ENCODE measurements at regions of chr1 and their contacts with region 1.

Region 1: GRCh38 chr1:32321712-32322291 is 14.2 kb downstream of the MARCKSL1 start:
- H3K4me3 ChIP-seq: no peak overlapping the region
- H3K27ac ChIP-seq: no peak overlapping the region
- H3K4me1 ChIP-seq: no peaks in the 10 kb centered on the region
- CTCF ChIP-seq: no peak

Region 2: DNA sequence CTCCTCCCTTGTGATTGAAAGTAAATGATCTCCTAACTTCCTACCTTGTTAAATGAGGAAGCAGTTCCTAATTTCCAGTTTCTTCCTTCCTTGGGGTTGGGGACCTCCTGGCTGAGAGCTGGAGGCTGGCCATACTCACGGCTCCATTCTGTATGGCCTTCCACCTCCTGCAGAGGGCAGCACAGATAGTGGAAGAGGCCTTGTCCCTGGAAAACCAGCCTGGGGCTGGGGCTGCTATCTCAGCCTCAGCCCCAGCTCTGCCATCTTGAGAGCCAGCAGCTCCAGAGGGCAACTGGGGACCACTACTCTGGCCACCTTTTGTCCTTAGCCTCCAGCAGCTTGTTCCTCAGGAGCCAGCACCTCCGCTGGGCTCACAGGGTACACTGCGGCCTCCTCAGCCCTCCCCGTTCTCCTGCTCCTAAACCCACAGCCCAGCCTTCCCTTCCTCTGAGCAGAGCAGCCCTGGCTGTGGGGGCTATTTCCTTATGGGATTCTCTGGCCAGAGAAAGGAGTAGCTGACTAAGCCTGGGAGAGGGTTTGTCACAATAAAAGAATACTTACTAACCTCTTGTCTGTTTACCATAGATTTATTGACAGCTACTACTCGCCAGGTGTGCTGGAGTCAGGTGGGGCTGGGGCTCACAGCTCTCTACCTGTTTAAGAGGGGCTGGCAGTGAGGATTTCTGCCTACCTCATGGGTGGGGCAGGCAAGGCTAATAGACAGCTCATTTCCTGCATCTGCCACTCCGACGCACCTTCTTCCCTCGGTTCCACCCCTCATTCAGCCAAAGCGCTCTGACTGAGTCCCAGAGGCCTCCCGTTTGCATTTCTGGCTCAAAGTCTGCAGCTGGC is 105.9 kb before region 1 on chr1:
- CTCF ChIA-PET with region 1: interaction called, 14 read pairs
- POLR2A ChIA-PET with region 1: no interaction called
- H3K4me3 ChIP-seq: no peak overlapping the region
- H3K27ac ChIP-seq: no peak overlapping the region
- H3K4me1 ChIP-seq: 0 out of 2 replicates have a peak, but pooled peaks cover 2% of the 10 kb centered on the region
- CTCF ChIP-seq: peak; percentile 72

Region 3: GRCh38 chr1:32303997-32304622 is 17.7 kb before region 1 on chr1:
- CTCF ChIA-PET with region 1: interaction called, 10 read pairs
- POLR2A ChIA-PET with region 1: interaction called, 3 read pairs
- H3K4me3 ChIP-seq: no peak overlapping the region
- H3K27ac ChIP-seq: no peak overlapping the region
- H3K4me1 ChIP-seq: no peaks in the 10 kb centered on the region
- CTCF ChIP-seq: no peak

Measured in HEK293 (cell line).